SK-N-SH (cell line): ENCODE measurements at regions of chr17 and their contacts with region 1.

Region 1: GRCh38 chr17:45172454-45173286 is 11.0 kb downstream of the HEXIM2 start:
- DNase-seq: peak; percentile 93
- H3K4me3 ChIP-seq: peak overlapping the region; percentile 25 to 30; a peak in 3 of 4 replicates
- H3K27ac ChIP-seq: peak overlapping the region; percentile 89 to 94
- H3K4me1 ChIP-seq: peaks cover 29 to 40% of the 10 kb centered on the region in 2 experiments; a peak in 3 of 4 replicates
- H3K27me3 ChIP-seq: no peaks in the 10 kb centered on the region
- CTCF ChIP-seq: peak; percentile 28; the same call in 1 of the 2 replicates
- EP300 ChIP-seq: peak; percentile 34 to 66; a peak in 2 of 4 replicates
- RAD21 ChIP-seq: peak; percentile 6; the same call in 1 of the 2 replicates

Region 2: DNA sequence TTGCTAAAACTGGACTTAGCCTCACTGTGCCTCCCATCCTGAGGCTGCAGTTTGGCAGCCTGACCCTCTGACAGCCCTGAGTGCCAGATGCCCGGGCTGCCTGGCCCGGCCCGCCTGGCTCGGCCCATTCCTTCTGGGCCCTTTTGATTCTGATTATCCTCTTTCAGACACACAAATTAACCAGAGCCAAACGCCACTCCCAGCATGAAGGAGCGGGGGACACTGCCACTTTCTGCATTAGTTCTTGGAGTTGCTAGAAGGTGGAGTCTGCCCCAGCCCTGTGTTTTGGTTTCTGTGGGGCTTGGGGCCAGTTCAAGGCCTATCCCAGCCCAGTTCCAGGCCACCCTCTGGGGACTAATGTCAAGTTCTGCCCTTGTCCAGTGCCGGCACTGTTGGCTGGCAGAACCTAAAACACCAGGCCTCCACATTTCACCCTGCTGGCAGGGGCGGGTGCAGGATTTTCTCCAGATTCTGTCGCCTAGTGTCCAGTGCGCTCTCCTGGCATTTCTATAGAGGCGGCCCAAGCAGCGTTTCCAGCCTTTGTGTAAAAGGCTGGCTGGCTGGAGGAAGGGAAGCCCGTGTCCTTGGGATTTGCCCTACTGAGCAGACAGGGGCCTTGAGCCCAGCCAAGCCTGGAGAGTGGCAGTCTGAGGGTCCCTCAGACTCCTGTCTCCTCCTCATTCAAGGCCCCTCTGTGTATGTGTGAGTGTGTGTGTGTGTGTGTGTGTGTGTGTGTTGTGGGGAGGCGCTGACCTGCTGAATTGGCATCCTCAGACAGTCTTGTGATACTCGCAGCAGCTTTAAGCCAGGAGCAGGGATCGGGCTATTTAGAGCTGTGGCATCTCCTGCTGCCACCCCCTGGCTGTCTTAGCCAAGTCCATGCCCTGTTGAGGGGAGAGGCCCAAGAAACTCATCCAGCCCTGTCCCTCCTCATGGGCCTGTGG is 61.7 kb before region 1 on chr17:
- CTCF ChIA-PET with region 1: no interaction called
- POLR2A ChIA-PET with region 1: no interaction called
- DNase-seq: peak; percentile 36
- H3K4me3 ChIP-seq: no peak overlapping the region
- H3K27ac ChIP-seq: no peak overlapping the region
- H3K4me1 ChIP-seq: peaks cover 0 to 13% of the 10 kb centered on the region in 2 experiments; a peak in 1 of 4 replicates
- H3K27me3 ChIP-seq: no peaks in the 10 kb centered on the region
- CTCF ChIP-seq: no peak
- EP300 ChIP-seq: no peak
- RAD21 ChIP-seq: no peak

Region 3: GRCh38 chr17:45161019-45161825 is 11.4 kb before region 1 on chr17:
- CTCF ChIA-PET with region 1: interaction called, 17 read pairs
- POLR2A ChIA-PET with region 1: interaction called, 50 read pairs
- DNase-seq: peak; percentile 96
- H3K4me3 ChIP-seq: peak overlapping the region; percentile 74 to 91
- H3K27ac ChIP-seq: peak overlapping the region; percentile 90 to 94
- H3K4me1 ChIP-seq: peaks cover 6 to 18% of the 10 kb centered on the region in 2 experiments; a peak in 2 of 4 replicates
- H3K27me3 ChIP-seq: no peaks in the 10 kb centered on the region
- CTCF ChIP-seq: peak; percentile 34
- EP300 ChIP-seq: peak in 1 of 2 experiments; percentile 55; a peak in 1 of 4 replicates
- RAD21 ChIP-seq: no peak

Region 4: DNA sequence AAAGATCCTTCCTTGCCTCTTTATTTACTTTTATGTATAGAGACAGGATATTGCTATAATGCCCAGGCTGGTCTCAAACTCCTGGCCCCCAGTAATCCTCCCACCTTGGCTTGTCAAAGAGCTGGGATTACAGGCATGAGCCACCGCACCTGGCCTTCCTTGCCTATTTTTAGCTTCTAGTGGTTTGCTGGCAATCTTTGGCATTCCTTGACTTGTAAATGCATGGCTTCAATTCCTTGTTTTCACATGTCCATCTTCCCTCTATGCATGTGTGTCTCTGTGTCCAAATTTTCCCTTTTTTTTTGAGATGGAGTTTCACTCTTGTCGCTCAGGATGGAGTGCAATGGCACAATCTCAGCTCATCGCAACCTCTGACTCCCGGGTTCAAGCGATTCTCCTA is 11.5 kb after region 1 on chr17:
- CTCF ChIA-PET with region 1: interaction called, 10 read pairs
- POLR2A ChIA-PET with region 1: interaction called, 5 read pairs
- DNase-seq: no peak
- H3K4me3 ChIP-seq: no peak overlapping the region
- H3K27ac ChIP-seq: no peak overlapping the region
- H3K4me1 ChIP-seq: no peaks in the 10 kb centered on the region
- H3K27me3 ChIP-seq: no peaks in the 10 kb centered on the region
- CTCF ChIP-seq: no peak
- EP300 ChIP-seq: no peak
- RAD21 ChIP-seq: no peak